ENCODE measurements at regions of chr5 and their contacts with region 1.

Region 1: DNA sequence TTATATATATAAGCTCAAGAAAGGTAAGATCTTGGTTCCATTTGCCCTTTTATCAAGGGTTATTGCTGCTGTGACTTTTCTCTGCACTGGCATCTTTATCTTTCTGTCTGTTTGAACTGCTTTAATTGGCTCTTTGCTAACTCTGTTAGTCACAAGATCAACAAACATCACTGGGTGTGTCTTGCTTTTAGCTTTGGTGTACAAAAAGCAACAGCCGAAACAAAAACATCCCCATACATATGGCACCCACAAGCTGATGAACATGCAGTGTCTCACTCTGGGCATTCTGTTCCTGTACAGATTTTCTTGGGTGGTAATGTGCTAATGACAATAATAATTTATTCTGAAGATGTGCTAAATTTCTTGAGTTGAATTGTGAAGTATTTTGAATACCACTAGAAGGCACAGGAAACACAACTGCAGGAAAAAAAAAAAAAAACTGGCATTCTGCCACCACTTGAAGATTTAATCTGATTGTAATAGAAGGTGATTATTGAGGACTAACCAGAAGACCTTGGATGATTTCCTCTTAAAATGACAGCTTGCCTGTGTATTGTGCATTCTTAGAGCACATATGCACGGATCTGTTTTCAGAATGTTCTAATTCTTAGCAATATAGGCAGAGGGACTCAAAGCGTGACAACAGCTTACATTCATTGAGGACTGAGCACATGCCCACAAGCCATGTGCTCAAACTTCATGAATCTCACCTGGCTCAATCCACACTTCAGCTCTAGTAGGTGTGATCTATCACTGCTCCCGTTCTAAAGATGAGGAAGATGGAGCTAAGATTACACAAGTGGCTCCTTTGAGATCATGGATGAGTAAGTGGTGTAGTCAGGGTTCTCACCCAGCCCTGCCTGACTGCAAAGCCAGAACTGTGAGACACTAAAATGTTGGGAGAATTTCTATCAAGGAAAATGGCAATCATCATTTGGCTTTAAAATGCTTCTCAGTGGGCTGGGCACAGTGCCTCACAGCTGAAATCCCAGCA is 96.4 kb downstream of the EBF1 start:
- DNase-seq: no peak
- ATAC-seq: no peak
- H3K4me3 ChIP-seq: no peak overlapping the region
- H3K27ac ChIP-seq: no peak overlapping the region
- H3K4me1 ChIP-seq: peaks cover 5% of the 10 kb centered on the region; the same call in 1 of the 2 replicates
- H3K27me3 ChIP-seq: no peaks in the 10 kb centered on the region
- CTCF ChIP-seq: no peak
- EP300 ChIP-seq: no peak
- POLR2A ChIP-seq: no peak
- RAD21 ChIP-seq: no peak

Region 2: GRCh38 chr5:158979749-158980521 is 23.4 kb before region 1 on chr5:
- CTCF ChIA-PET with region 1: interaction called, 7 read pairs
- POLR2A ChIA-PET with region 1: interaction called, 3 read pairs
- RAD21 ChIA-PET with region 1: interaction called, 7 read pairs
- SMC1A ChIA-PET with region 1: interaction called, 18 read pairs
- in situ Hi-C with region 1: no loop called
- intact Hi-C with region 1: no loop called
- DNase-seq: no peak
- ATAC-seq: no peak
- H3K4me3 ChIP-seq: no peak overlapping the region
- H3K27ac ChIP-seq: no peak overlapping the region
- H3K4me1 ChIP-seq: no peaks in the 10 kb centered on the region
- H3K27me3 ChIP-seq: no peaks in the 10 kb centered on the region
- CTCF ChIP-seq: no peak
- EP300 ChIP-seq: no peak
- POLR2A ChIP-seq: no peak
- RAD21 ChIP-seq: no peak

Region 3: GRCh38 chr5:159027504-159027903 is 24.2 kb after region 1 on chr5:
- CTCF ChIA-PET with region 1: interaction called, 5 read pairs
- POLR2A ChIA-PET with region 1: interaction called, 3 read pairs
- RAD21 ChIA-PET with region 1: no interaction called
- SMC1A ChIA-PET with region 1: interaction called, 14 read pairs
- in situ Hi-C with region 1: no loop called
- intact Hi-C with region 1: no loop called
- DNase-seq: no peak
- ATAC-seq: no peak
- H3K4me3 ChIP-seq: no peak overlapping the region
- H3K27ac ChIP-seq: no peak overlapping the region
- H3K4me1 ChIP-seq: peaks cover 10% of the 10 kb centered on the region
- H3K27me3 ChIP-seq: no peaks in the 10 kb centered on the region
- CTCF ChIP-seq: no peak
- EP300 ChIP-seq: no peak
- POLR2A ChIP-seq: no peak
- RAD21 ChIP-seq: no peak

Region 4: DNA sequence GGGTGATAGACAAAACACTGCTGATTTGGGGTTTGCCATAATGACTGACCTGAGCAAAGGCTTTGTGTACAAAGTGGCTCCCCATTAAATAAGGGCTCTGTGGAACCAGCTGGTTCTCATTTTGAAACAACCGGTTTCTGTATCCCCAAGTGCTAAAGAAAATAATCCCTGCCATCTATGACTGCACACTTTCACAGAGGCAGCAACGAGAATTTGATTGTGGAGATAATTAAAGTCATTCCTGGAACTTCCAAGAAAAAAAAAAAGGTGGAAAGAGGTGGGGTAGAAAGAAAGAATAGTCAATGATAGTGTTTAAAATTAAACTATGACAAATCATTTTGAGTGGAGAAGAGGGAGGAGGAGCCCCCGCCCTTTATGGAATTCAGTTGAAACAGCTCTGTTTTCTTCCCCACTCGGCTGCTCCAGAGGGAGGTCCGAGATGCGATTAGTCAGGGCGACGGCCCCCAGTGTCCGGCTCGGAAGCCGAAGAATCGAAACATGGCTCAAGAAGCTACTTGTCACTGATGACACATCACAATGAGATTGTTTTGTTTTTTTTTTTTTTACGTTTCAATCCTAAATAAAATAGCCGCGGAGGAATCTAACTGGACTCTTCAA is 58.0 kb after region 1 on chr5:
- CTCF ChIA-PET with region 1: interaction called, 3 read pairs
- POLR2A ChIA-PET with region 1: no interaction called
- RAD21 ChIA-PET with region 1: no interaction called
- SMC1A ChIA-PET with region 1: interaction called, 21 read pairs
- in situ Hi-C with region 1: no loop called
- intact Hi-C with region 1: no loop called
- DNase-seq: no peak
- ATAC-seq: peak; percentile 39
- H3K4me3 ChIP-seq: no peak overlapping the region
- H3K27ac ChIP-seq: no peak overlapping the region
- H3K4me1 ChIP-seq: peaks cover 12% of the 10 kb centered on the region; the same call in 1 of the 2 replicates
- H3K27me3 ChIP-seq: no peaks in the 10 kb centered on the region
- CTCF ChIP-seq: no peak
- EP300 ChIP-seq: no peak
- POLR2A ChIP-seq: no peak
- RAD21 ChIP-seq: no peak

Measured in GM12878 (cell line).